ENCODE measurements at regions of chr18 and their contacts with region 1.

Region 1: GRCh38 chr18:5073026-5073944 is 123.8 kb downstream of the AKAIN1 start:
- DNase-seq: peak; percentile 31
- ATAC-seq: peak; percentile 78
- H3K4me3 ChIP-seq: no peak overlapping the region
- H3K27ac ChIP-seq: no peak overlapping the region
- H3K4me1 ChIP-seq: no peaks in the 10 kb centered on the region
- H3K27me3 ChIP-seq: 0 out of 5 replicates have a peak, but pooled peaks cover 0 to 2% of the 10 kb centered on the region in 2 experiments
- CTCF ChIP-seq: peak; percentile 82
- EP300 ChIP-seq: no peak
- POLR2A ChIP-seq: no peak
- RAD21 ChIP-seq: peak; percentile 60

Region 2: DNA sequence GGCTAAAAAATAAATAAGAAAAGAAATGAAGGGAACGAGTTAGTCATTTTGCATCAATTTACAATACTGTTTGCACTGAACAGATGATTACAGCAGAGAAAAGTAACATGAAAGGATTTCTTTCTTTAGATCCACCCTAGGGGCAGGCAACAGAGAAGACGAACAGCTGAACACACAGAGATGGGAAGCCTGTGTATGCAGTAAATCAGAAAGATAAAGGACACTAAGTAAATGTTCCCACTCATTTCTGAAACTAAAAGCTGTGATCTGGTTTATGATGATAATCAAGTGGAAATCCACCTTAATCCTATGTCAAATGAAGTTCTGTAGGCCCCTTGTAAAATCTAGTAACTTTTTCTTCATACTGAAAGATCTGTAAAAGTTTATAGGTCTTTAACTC is 69.6 kb after region 1 on chr18:
- CTCF ChIA-PET with region 1: no interaction called
- POLR2A ChIA-PET with region 1: no interaction called
- in situ Hi-C with region 1: no loop called
- intact Hi-C with region 1: no loop called
- DNase-seq: no peak
- ATAC-seq: no peak
- H3K4me3 ChIP-seq: no peak overlapping the region
- H3K27ac ChIP-seq: no peak overlapping the region
- H3K4me1 ChIP-seq: no peaks in the 10 kb centered on the region
- H3K27me3 ChIP-seq: no peaks in the 10 kb centered on the region
- CTCF ChIP-seq: no peak
- EP300 ChIP-seq: no peak
- POLR2A ChIP-seq: no peak
- RAD21 ChIP-seq: no peak

Region 3: GRCh38 chr18:5439986-5440696 is 366.9 kb after region 1 on chr18:
- CTCF ChIA-PET with region 1: no interaction called
- POLR2A ChIA-PET with region 1: no interaction called
- in situ Hi-C with region 1: no loop called
- intact Hi-C with region 1: loop called (anchors 10 kb)
- DNase-seq: no peak
- ATAC-seq: no peak
- H3K4me3 ChIP-seq: no peak overlapping the region
- H3K27ac ChIP-seq: no peak overlapping the region
- H3K4me1 ChIP-seq: no peaks in the 10 kb centered on the region
- H3K27me3 ChIP-seq: no peaks in the 10 kb centered on the region; a peak in 1 of 5 replicates
- CTCF ChIP-seq: no peak
- EP300 ChIP-seq: no peak
- POLR2A ChIP-seq: no peak
- RAD21 ChIP-seq: no peak

Measured in HepG2 (cell line).